Naive thymus-derived CD4-positive, alpha-beta T cell (primary cell): ENCODE measurements at regions of chr2 and their contacts with region 1.

Region 1: GRCh38 chr2:74958274-74959105 is at the start of gene POLE4:
- DNase-seq: peak; percentile 89 to 96 (median 95)
- ATAC-seq: peak; percentile 95
- H3K4me3 ChIP-seq: peak within 1 kb of the TSS; percentile 78
- H3K4me3 Mint-ChIP-seq: peak within 1 kb of the TSS; percentile 70 to 88 (median 85)
- H3K27ac ChIP-seq: peak within 1 kb of the TSS; percentile 87
- H3K27ac Mint-ChIP-seq: peak within 1 kb of the TSS; percentile 70 to 96 (median 89)
- H3K4me1 ChIP-seq: peaks cover 9 to 14% of the 10 kb centered on the region in 2 donors
- H3K4me1 Mint-ChIP-seq: peaks cover 30 to 87% (median 65%) of the 10 kb centered on the region in 7 donors
- H3K27me3 ChIP-seq: no peaks in the 10 kb centered on the region
- H3K27me3 Mint-ChIP-seq: no peaks in the 10 kb centered on the region
- total RNA-seq, gene POLE4: 37.8 to 49.1 (median 43.6) TPM

Region 2: GRCh38 chr2:73212448-73213176 is 1745.9 kb before region 1 on chr2:
- CTCF ChIA-PET with region 1: no interaction called
- POLR2A ChIA-PET with region 1: no interaction called
- intact Hi-C with region 1: loop called in 1 of 2 experiments (anchors 5 kb)
- DNase-seq: peak; percentile 48 to 71 (median 64)
- ATAC-seq: peak; percentile 76
- H3K4me3 ChIP-seq: no peak overlapping the region
- H3K4me3 Mint-ChIP-seq: peak overlapping the region in 8 of 10 donors; percentile 15 to 97 (median 62)
- H3K27ac ChIP-seq: no peak overlapping the region
- H3K27ac Mint-ChIP-seq: peak overlapping the region in 6 of 9 donors; percentile 40 to 98 (median 91)
- H3K4me1 ChIP-seq: peaks cover 14 to 18% of the 10 kb centered on the region in 2 donors
- H3K4me1 Mint-ChIP-seq: peaks cover 16 to 44% (median 36%) of the 10 kb centered on the region in 7 donors
- H3K27me3 ChIP-seq: no peaks in the 10 kb centered on the region
- H3K27me3 Mint-ChIP-seq: peaks cover 4 to 8% (median 7%) of the 10 kb centered on the region in 5 donors

Region 3: GRCh38 chr2:74507145-74507925 is 451.2 kb before region 1 on chr2 and contains the start of gene PCGF1:
- CTCF ChIA-PET with region 1: no interaction called
- POLR2A ChIA-PET with region 1: no interaction called
- intact Hi-C with region 1: loop called in 1 of 2 experiments (anchors 1 kb)
- DNase-seq: peak; percentile 97 to 99 (median 98)
- ATAC-seq: peak; percentile 96
- H3K4me3 ChIP-seq: peak within 1 kb of the TSS; percentile 96
- H3K4me3 Mint-ChIP-seq: peak within 1 kb of the TSS; percentile 95 to 100 (median 99)
- H3K27ac ChIP-seq: peak within 1 kb of the TSS; percentile 94
- H3K27ac Mint-ChIP-seq: peak within 1 kb of the TSS; percentile 97 to 100 (median 100)
- H3K4me1 ChIP-seq: peaks cover 16 to 29% of the 10 kb centered on the region in 2 donors
- H3K4me1 Mint-ChIP-seq: peaks cover 34 to 66% (median 57%) of the 10 kb centered on the region in 7 donors
- H3K27me3 ChIP-seq: peaks cover 3 to 16% of the 10 kb centered on the region in 2 donors
- H3K27me3 Mint-ChIP-seq: peaks cover 47 to 58% (median 49%) of the 10 kb centered on the region in 5 donors
- total RNA-seq, gene PCGF1: 25.7 to 37.0 (median 31.2) TPM

Region 4: GRCh38 chr2:74833418-74834233 is 124.9 kb before region 1 on chr2 and contains the start of gene HK2:
- CTCF ChIA-PET with region 1: no interaction called
- POLR2A ChIA-PET with region 1: interaction called, 3 read pairs
- intact Hi-C with region 1: loop called (anchors 1 kb)
- DNase-seq: peak; percentile 68 to 87 (median 78)
- ATAC-seq: peak; percentile 91
- H3K4me3 ChIP-seq: peak within 1 kb of the TSS; percentile 72
- H3K4me3 Mint-ChIP-seq: peak within 1 kb of the TSS; percentile 89 to 97 (median 94)
- H3K27ac ChIP-seq: peak within 1 kb of the TSS; percentile 67
- H3K27ac Mint-ChIP-seq: peak within 1 kb of the TSS; percentile 35 to 95 (median 91)
- H3K4me1 ChIP-seq: peaks cover 14 to 32% of the 10 kb centered on the region in 2 donors
- H3K4me1 Mint-ChIP-seq: peaks cover 28 to 49% (median 33%) of the 10 kb centered on the region in 7 donors
- H3K27me3 ChIP-seq: no peaks in the 10 kb centered on the region
- H3K27me3 Mint-ChIP-seq: peaks cover 0 to 7% (median 0%) of the 10 kb centered on the region in 5 donors
- total RNA-seq, gene HK2: 11.1 to 74.6 (median 17.7) TPM

Region 5: GRCh38 chr2:74919827-74920226 is 38.7 kb before region 1 on chr2:
- CTCF ChIA-PET with region 1: no interaction called
- POLR2A ChIA-PET with region 1: no interaction called
- intact Hi-C with region 1: loop called in 1 of 2 experiments (anchors 5 kb)
- DNase-seq: peak; percentile 37 to 79 (median 73)
- ATAC-seq: peak; percentile 77
- H3K4me3 ChIP-seq: no peak overlapping the region
- H3K4me3 Mint-ChIP-seq: peak overlapping the region in 6 of 10 donors; percentile 21 to 77 (median 52)
- H3K27ac ChIP-seq: no peak overlapping the region
- H3K27ac Mint-ChIP-seq: peak overlapping the region in 1 of 9 donors; percentile 55
- H3K4me1 ChIP-seq: peaks cover 0 to 9% of the 10 kb centered on the region in 2 donors
- H3K4me1 Mint-ChIP-seq: peaks cover 0 to 17% (median 10%) of the 10 kb centered on the region in 7 donors
- H3K27me3 ChIP-seq: no peaks in the 10 kb centered on the region
- H3K27me3 Mint-ChIP-seq: peaks cover 5 to 27% (median 17%) of the 10 kb centered on the region in 5 donors

Region 6: DNA sequence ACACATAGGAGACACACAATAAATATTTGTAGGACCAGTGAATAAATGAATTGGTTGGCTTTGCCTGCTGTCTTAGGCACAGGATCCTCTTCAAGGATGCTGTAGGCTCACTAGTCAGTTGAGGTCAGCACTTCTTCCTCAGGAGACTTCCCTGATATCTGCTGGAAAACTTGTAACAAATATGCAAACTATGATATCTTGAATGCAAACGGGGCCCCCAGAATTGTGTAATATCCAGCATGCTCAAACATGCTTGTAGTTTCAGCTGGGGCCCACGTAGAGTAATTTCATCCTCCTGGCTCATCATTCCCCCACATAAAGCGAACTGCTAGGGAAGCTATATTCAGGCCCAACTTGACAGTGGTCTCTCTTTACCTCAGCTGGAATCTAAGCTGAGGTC is 43.5 kb after region 1 on chr2:
- CTCF ChIA-PET with region 1: no interaction called
- POLR2A ChIA-PET with region 1: no interaction called
- intact Hi-C with region 1: no loop called
- DNase-seq: no peak
- ATAC-seq: no peak
- H3K4me3 ChIP-seq: no peak overlapping the region
- H3K4me3 Mint-ChIP-seq: no peak overlapping the region
- H3K27ac ChIP-seq: no peak overlapping the region
- H3K27ac Mint-ChIP-seq: no peak overlapping the region
- H3K4me1 ChIP-seq: no peaks in the 10 kb centered on the region
- H3K4me1 Mint-ChIP-seq: peaks cover 0 to 2% (median 0%) of the 10 kb centered on the region in 7 donors
- H3K27me3 ChIP-seq: no peaks in the 10 kb centered on the region
- H3K27me3 Mint-ChIP-seq: no peaks in the 10 kb centered on the region

Region 7: GRCh38 chr2:75130171-75130570 is 171.7 kb after region 1 on chr2:
- CTCF ChIA-PET with region 1: no interaction called
- POLR2A ChIA-PET with region 1: no interaction called
- intact Hi-C with region 1: no loop called
- DNase-seq: no peak
- ATAC-seq: no peak
- H3K4me3 ChIP-seq: no peak overlapping the region
- H3K4me3 Mint-ChIP-seq: no peak overlapping the region
- H3K27ac ChIP-seq: no peak overlapping the region
- H3K27ac Mint-ChIP-seq: no peak overlapping the region
- H3K4me1 ChIP-seq: no peaks in the 10 kb centered on the region
- H3K4me1 Mint-ChIP-seq: peaks cover 0 to 1% (median 0%) of the 10 kb centered on the region in 7 donors
- H3K27me3 ChIP-seq: no peaks in the 10 kb centered on the region
- H3K27me3 Mint-ChIP-seq: peaks cover 0 to 3% (median 0%) of the 10 kb centered on the region in 5 donors

Region 8: DNA sequence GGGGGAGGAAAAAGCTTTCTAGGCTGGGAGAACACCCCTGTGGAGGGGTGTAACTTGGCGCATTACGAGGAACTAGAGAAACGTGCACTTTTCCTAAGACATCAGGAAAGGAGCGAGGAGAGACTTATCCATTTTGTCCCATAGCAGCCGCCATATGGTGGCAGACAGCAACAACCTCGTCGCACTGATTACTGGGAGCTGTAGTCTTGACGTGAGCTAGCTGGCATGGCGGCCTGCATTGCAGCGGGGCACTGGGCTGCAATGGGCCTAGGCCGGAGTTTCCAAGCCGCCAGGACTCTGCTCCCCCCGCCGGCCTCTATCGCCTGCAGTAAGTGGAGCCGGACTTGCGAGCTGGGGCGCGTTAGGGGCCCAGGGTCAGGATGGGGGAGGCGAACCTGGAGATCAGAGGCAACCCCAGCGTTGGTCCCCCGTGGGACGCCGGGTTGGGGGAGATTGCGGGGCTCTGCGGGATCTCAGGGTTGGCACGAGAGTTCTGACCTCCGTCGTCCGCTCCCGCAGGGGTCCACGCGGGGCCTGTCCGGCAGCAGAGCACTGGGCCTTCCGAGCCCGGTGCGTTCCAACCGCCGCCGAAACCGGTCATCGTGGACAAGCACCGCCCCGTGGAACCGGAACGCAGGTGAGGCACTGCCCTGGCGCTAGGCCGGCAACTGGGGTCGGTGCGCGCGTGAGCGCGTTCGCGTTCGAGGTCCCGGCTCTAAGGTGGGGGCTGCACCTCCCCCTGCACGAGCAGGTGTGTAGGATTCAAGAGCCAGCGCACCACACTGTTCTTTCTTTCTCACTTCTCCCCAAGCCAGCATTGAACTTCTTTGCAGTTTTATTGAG is 688.3 kb after region 1 on chr2 and contains the start of gene MRPL19:
- CTCF ChIA-PET with region 1: no interaction called
- POLR2A ChIA-PET with region 1: no interaction called
- intact Hi-C with region 1: loop called in 1 of 2 experiments (anchors 1 kb)
- DNase-seq: peak; percentile 45 to 81 (median 74)
- ATAC-seq: peak; percentile 98
- H3K4me3 ChIP-seq: peak within 1 kb of the TSS; percentile 92
- H3K4me3 Mint-ChIP-seq: peak within 1 kb of the TSS; percentile 83 to 96 (median 93)
- H3K27ac ChIP-seq: peak within 1 kb of the TSS; percentile 80
- H3K27ac Mint-ChIP-seq: peak within 1 kb of the TSS; percentile 80 to 98 (median 87)
- H3K4me1 ChIP-seq: peaks cover 7 to 17% of the 10 kb centered on the region in 2 donors
- H3K4me1 Mint-ChIP-seq: peaks cover 25 to 51% (median 45%) of the 10 kb centered on the region in 7 donors
- H3K27me3 ChIP-seq: no peaks in the 10 kb centered on the region
- H3K27me3 Mint-ChIP-seq: no peaks in the 10 kb centered on the region
- total RNA-seq, gene MRPL19: 14.2 to 44.8 (median 25.3) TPM